CD4-positive, alpha-beta T cell (primary cell): ENCODE measurements at regions of chr19 and their contacts with region 1.

Region 1: DNA sequence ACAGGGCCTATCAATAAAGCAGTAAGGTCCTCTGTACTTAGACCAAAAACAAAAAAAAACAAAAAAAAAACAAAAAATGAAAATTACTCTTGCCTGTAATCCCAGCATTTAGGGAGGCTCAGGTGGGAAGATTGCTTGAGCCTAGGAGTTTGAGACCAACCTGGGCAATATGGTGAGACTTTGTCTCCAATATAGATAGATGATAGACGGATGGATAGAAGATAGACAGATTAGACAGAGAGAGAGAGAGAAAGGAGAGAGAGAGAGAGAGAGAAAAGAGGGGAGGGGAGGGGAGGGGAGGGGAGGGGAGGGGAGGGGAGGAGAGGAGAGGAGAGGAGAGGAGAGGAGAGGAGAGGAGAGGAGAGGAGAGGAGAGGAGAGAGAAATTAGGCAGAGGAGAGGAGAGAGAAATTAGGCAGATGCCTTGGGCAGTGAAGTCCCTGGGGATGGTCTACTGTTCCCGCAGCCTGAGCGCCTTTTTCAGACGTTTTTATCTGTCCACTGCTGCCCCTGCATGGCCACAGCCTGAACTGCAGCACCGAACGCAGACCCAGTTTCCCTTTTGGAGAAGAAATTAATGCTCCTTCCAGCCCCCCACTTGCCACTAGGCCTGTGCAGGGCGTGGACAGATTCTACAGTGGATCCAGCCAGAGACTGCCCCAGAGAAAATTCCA is 9.8 kb upstream of the ZNF627 start:
- DNase-seq: peak; percentile 62 to 84 (median 72)
- ATAC-seq: peak; percentile 98
- H3K4me3 ChIP-seq: no peak overlapping the region
- H3K4me3 Mint-ChIP-seq: no peak overlapping the region
- H3K27ac ChIP-seq: no peak overlapping the region
- H3K27ac Mint-ChIP-seq: no peak overlapping the region
- H3K4me1 ChIP-seq: peaks cover 7% of the 10 kb centered on the region
- H3K4me1 Mint-ChIP-seq: no peaks in the 10 kb centered on the region
- H3K27me3 ChIP-seq: no peaks in the 10 kb centered on the region
- H3K27me3 Mint-ChIP-seq: no peaks in the 10 kb centered on the region
- CTCF ChIP-seq: peak; percentile 85

Region 2: DNA sequence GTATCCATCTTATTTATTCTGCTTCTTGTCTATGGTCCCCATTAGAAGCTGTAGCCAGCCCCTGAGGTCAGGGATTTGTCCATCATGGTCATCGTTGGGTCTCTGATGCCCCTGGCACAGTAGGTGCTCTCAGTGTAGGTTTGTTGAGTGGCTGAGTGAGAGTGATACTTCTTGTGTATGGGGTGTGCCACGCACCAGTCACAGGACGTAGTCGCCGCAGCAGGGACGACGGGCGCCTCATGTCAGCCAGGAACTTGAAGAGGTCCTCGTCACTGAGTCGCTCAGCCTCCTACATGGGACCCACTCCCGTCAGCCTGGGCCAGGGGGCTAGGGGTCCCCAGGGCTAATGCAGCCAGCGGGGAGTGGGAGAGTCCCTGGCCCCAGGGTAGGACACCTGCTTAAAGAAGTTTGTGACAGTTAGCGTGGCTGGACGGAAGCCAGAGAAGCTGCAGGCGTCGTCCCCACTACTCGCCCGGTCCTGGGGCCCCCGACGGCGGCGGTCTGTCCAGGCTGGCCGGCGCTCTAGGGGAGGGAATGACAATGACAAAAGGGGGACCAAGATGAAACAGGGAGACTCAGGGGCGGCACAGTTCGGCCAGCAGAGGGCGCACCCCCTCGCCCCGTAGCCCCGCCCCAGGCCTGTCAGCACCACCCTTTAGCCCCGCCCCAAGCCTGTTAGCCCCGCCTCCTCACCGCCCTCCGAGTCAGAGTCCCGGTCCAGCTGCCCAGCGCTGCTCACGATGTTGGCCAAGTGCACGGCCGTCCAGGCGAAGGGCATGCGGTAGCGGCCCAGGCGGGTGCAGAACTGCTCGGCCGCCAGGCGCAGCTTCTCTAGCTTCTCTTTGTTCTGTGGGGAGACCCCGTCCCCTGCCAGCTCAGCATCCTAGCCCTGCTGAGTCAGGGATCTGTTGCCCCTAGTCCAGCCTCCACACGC is 344.3 kb before region 1 on chr19:
- CTCF ChIA-PET with region 1: no interaction called
- POLR2A ChIA-PET with region 1: no interaction called
- intact Hi-C with region 1: loop called in 1 of 2 experiments (anchors 5 kb)
- DNase-seq: peak; percentile 71 to 87 (median 78)
- ATAC-seq: peak; percentile 99
- H3K4me3 ChIP-seq: no peak overlapping the region
- H3K4me3 Mint-ChIP-seq: no peak overlapping the region
- H3K27ac ChIP-seq: no peak overlapping the region
- H3K27ac Mint-ChIP-seq: no peak overlapping the region
- H3K4me1 ChIP-seq: peaks cover 9% of the 10 kb centered on the region
- H3K4me1 Mint-ChIP-seq: peaks cover 5% of the 10 kb centered on the region
- H3K27me3 ChIP-seq: peaks cover 5 to 15% of the 10 kb centered on the region in 2 experiments
- H3K27me3 Mint-ChIP-seq: peaks cover 46% of the 10 kb centered on the region
- CTCF ChIP-seq: peak; percentile 67

Region 3: GRCh38 chr19:11435058-11435832 is 152.2 kb before region 1 on chr19 and contains the starts of genes ODAD3 and PRKCSH:
- CTCF ChIA-PET with region 1: no interaction called
- POLR2A ChIA-PET with region 1: no interaction called
- intact Hi-C with region 1: loop called in 1 of 2 experiments (anchors 10 kb)
- DNase-seq: peak; percentile 95 to 99 (median 97)
- ATAC-seq: peak; percentile 94
- H3K4me3 ChIP-seq: peak within 1 kb of the TSS; percentile 90
- H3K4me3 Mint-ChIP-seq: peak within 1 kb of the TSS; percentile 96
- H3K27ac ChIP-seq: peak within 1 kb of the TSS; percentile 58 to 83
- H3K27ac Mint-ChIP-seq: peak within 1 kb of the TSS; percentile 84
- H3K4me1 ChIP-seq: peaks cover 26% of the 10 kb centered on the region
- H3K4me1 Mint-ChIP-seq: peaks cover 21% of the 10 kb centered on the region
- H3K27me3 ChIP-seq: no peaks in the 10 kb centered on the region
- H3K27me3 Mint-ChIP-seq: no peaks in the 10 kb centered on the region
- CTCF ChIP-seq: peak; percentile 87
- total RNA-seq, gene ODAD3: not detected
- total RNA-seq, gene PRKCSH: 257 to 260 TPM

Region 4: GRCh38 chr19:11535792-11536595 is 51.4 kb before region 1 on chr19:
- CTCF ChIA-PET with region 1: no interaction called
- POLR2A ChIA-PET with region 1: no interaction called
- intact Hi-C with region 1: loop called (anchors 1 kb)
- DNase-seq: peak; percentile 59 to 92 (median 79)
- ATAC-seq: peak; percentile 84
- H3K4me3 ChIP-seq: peak overlapping the region; percentile 24
- H3K4me3 Mint-ChIP-seq: peak overlapping the region; percentile 71
- H3K27ac ChIP-seq: no peak overlapping the region
- H3K27ac Mint-ChIP-seq: peak overlapping the region; percentile 48
- H3K4me1 ChIP-seq: peaks cover 21% of the 10 kb centered on the region
- H3K4me1 Mint-ChIP-seq: peaks cover 12% of the 10 kb centered on the region
- H3K27me3 ChIP-seq: peaks cover 17 to 18% of the 10 kb centered on the region in 2 experiments
- H3K27me3 Mint-ChIP-seq: peaks cover 20% of the 10 kb centered on the region
- CTCF ChIP-seq: peak; percentile 87